Heart right ventricle (tissue), 16 donors: ENCODE measurements at regions of chr20 and their contacts with region 1.

Region 1: GRCh38 chr20:17885544-17885943 is 83.0 kb downstream of the SNX5 start:
- DNase-seq: peak in 1 of 2 donors; percentile 51
- ATAC-seq: peak in 7 of 8 donors; percentile 45 to 64 (median 52)
- H3K4me3 ChIP-seq: no peak overlapping the region
- H3K27ac ChIP-seq: peak overlapping the region in 1 of 10 donors; percentile 53
- H3K4me1 ChIP-seq: peaks cover 5 to 34% (median 22%) of the 10 kb centered on the region in 9 donors
- H3K27me3 ChIP-seq: no peaks in the 10 kb centered on the region
- CTCF ChIP-seq: no peak

Region 2: GRCh38 chr20:17825960-17826843 is 59.3 kb before region 1 on chr20:
- intact Hi-C with region 1: loop called in 1 of 10 experiments (anchors 10 kb)
- DNase-seq: no peak
- ATAC-seq: no peak
- H3K4me3 ChIP-seq: no peak overlapping the region
- H3K27ac ChIP-seq: peak overlapping the region in 8 of 10 donors; percentile 30 to 78 (median 59)
- H3K4me1 ChIP-seq: peaks cover 4 to 23% (median 14%) of the 10 kb centered on the region in 9 donors
- H3K27me3 ChIP-seq: no peaks in the 10 kb centered on the region
- CTCF ChIP-seq: no peak